ENCODE measurements at regions of chr11 and their contacts with region 1.

Region 1: DNA sequence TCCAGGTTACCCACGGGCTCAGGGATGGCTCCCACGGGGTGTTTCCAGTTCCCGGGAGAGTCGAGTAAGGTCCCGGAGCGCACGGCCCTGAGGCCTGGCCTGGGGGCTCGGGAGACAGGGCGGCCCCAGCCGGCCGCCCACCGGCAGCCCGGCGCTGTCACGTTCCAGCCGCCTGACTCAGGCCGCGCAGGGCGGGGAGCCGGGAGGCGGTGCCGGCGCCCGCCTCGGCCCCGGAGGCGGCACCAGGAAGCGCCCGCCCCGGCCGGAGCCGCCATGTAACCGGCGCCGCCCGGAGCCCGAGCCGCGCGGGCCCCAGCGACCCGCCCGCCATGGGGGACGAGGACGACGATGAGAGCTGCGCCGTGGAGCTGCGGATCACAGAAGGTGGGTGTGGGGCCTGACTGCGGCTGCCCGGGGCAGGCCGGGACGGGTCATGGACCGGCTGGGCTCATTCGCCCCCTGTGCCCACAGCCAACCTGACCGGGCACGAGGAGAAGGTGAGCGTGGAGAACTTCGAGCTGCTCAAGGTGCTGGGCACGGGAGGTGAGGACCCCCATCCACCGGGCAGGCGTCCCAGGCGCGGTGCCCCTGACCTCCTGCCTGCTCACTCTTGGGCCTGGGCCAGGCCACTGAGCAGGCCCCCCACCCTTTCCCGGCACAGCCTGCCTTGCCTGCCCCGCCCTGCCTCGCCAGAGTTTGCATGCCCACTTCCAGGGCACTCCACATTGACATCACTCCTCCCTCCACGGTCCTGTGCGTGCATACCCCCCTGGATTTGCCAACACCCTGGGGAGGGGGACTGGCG is at the start of gene RPS6KA4:
- DNase-seq: no peak
- ATAC-seq: peak; percentile 85
- H3K4me3 ChIP-seq: peak within 1 kb of the TSS; percentile 69
- H3K27ac ChIP-seq: peak within 1 kb of the TSS; percentile 72
- H3K4me1 ChIP-seq: peaks cover 36% of the 10 kb centered on the region
- H3K27me3 ChIP-seq: no peaks in the 10 kb centered on the region
- CTCF ChIP-seq: no peak
- EP300 ChIP-seq: no peak
- POLR2A ChIP-seq: peak; percentile 82
- RAD21 ChIP-seq: no peak
- polyA plus RNA-seq, gene RPS6KA4: 0.34 to 0.73 TPM

Region 2: GRCh38 chr11:64324692-64325469 is 34.2 kb before region 1 on chr11:
- CTCF ChIA-PET with region 1: interaction called, 143 read pairs
- POLR2A ChIA-PET with region 1: interaction called, 7 read pairs
- RAD21 ChIA-PET with region 1: interaction called, 176 read pairs
- SMC1A ChIA-PET with region 1: no interaction called
- in situ Hi-C with region 1: no loop called
- intact Hi-C with region 1: no loop called
- DNase-seq: no peak
- ATAC-seq: peak; percentile 66
- H3K4me3 ChIP-seq: no peak overlapping the region
- H3K27ac ChIP-seq: no peak overlapping the region
- H3K4me1 ChIP-seq: no peaks in the 10 kb centered on the region
- H3K27me3 ChIP-seq: no peaks in the 10 kb centered on the region
- CTCF ChIP-seq: no peak
- EP300 ChIP-seq: no peak
- POLR2A ChIP-seq: no peak
- RAD21 ChIP-seq: no peak

Region 3: DNA sequence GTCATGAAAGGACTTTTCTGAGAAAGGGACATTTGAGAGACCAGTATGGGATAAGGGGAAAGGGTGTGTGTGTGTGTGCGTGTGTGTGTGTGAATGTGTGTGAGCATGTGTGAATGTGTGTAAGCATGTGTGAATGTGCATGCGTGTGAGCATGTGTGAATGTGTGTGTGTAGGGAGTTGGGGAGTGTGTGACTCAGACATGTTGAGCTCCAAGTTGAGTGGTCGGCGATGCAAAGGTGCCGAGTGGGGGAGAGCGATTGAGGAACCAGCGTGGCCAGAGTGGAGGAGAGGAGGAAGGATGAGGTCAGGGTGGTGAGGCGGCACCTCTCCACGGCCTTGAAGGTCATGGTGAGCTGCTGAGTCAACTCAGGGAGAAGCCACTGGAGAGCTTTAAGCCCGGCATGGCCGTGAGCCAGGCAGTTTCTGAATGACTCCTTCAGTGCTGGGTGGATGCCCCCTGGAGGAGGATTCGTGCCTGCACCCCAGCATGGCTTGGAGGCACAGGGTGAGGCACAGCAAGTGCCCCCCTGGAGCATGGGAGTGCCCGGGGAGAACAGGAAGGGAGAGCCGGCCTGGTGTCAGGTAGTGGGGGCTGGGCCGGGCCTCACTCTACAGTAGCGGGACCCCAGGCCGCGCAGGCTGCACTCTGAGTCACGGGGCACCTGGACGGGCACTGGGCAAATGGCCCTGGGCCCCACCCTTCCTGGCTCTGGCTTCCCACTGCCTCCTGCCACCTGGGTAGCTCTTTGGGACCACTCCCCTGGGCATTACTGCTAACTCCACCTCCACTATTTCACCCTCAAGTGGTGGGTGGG is 27.3 kb before region 1 on chr11:
- CTCF ChIA-PET with region 1: interaction called, 100 read pairs
- POLR2A ChIA-PET with region 1: interaction called, 7 read pairs
- RAD21 ChIA-PET with region 1: interaction called, 29 read pairs
- SMC1A ChIA-PET with region 1: interaction called, 13 read pairs
- in situ Hi-C with region 1: no loop called
- intact Hi-C with region 1: no loop called
- DNase-seq: peak; percentile 80
- ATAC-seq: peak; percentile 80
- H3K4me3 ChIP-seq: no peak overlapping the region
- H3K27ac ChIP-seq: peak overlapping the region; percentile 52
- H3K4me1 ChIP-seq: peaks cover 21% of the 10 kb centered on the region
- H3K27me3 ChIP-seq: no peaks in the 10 kb centered on the region
- CTCF ChIP-seq: peak; percentile 78 to 86 (median 82)
- EP300 ChIP-seq: peak in 1 of 2 experiments; percentile 68; a peak in 1 of 4 replicates
- POLR2A ChIP-seq: peak; percentile 53; the same call in 1 of the 2 replicates
- RAD21 ChIP-seq: peak; percentile 53

Region 4: DNA sequence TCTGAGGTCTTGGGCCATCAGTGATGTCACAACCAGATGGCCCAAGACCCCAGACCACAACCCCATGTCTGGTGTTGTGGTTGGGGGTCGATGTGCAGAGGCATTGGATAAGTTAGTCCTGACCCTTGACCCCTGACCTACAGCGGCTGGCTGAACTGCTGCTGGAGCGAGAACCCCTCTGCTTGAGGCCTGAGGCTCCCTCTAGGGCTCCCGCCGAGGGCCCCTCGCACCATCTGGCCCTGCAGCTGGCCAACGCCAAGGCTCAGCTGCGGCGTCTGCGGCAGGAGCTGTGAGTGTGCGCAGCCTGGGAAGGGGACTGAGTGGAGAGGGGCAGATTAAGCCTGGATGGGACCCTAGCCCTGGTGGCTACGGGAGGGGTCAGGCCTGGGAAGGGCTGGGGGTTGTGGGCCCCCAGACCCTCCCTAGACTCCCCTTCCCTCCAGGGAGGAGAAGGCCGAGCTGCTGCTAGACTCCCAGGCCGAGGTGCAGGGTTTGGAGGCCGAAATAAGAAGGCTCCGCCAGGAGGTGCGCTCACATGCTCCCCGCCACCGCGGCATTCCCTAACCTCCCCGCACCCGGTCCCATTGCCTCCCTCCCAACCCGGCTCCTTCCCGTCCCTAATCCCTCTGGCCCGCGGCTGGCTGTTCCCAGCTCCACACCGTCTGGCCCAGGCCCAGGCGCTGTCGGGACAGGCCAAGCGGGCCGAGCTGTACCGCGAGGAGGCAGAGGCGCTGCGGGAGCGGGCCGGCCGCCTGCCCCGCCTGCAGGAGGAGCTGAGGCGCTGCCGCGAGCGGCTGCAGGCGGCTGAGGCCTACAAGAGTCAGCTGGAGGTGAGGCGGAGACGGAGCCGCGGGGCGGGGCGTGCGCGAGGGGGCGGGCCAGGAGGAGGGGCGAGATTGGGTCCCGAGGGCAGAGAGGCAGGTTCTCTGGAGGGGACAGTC is 17.0 kb before region 1 on chr11:
- CTCF ChIA-PET with region 1: interaction called, 100 read pairs
- POLR2A ChIA-PET with region 1: interaction called, 3 read pairs
- RAD21 ChIA-PET with region 1: interaction called, 53 read pairs
- SMC1A ChIA-PET with region 1: interaction called, 9 read pairs
- in situ Hi-C with region 1: no loop called
- intact Hi-C with region 1: no loop called
- DNase-seq: no peak
- ATAC-seq: peak; percentile 78
- H3K4me3 ChIP-seq: peak overlapping the region; percentile 45; the same call in 1 of the 2 replicates
- H3K27ac ChIP-seq: no peak overlapping the region
- H3K4me1 ChIP-seq: peaks cover 24% of the 10 kb centered on the region
- H3K27me3 ChIP-seq: no peaks in the 10 kb centered on the region
- CTCF ChIP-seq: peak; percentile 21 to 31 (median 29); a peak in 3 of 6 replicates
- EP300 ChIP-seq: no peak
- POLR2A ChIP-seq: peak; percentile 47; the same call in 1 of the 2 replicates
- RAD21 ChIP-seq: peak; percentile 23; the same call in 1 of the 2 replicates